Lower lobe of right lung (tissue), 2 donors: ENCODE measurements at regions of chr7 and their contacts with region 1.

Region 1: GRCh38 chr7:77759294-77759889 is 38.8 kb downstream of the TMEM60 start:
- DNase-seq: no peak
- ATAC-seq: peak; percentile 82 to 84
- H3K4me3 ChIP-seq: no peak overlapping the region
- H3K27ac ChIP-seq: no peak overlapping the region
- H3K4me1 ChIP-seq: peaks cover 5% of the 10 kb centered on the region
- H3K27me3 ChIP-seq: no peaks in the 10 kb centered on the region
- CTCF ChIP-seq: peak; percentile 85

Region 2: GRCh38 chr7:77657427-77658224 is 101.8 kb before region 1 on chr7:
- intact Hi-C with region 1: loop called (anchors 10 kb)
- DNase-seq: no peak
- ATAC-seq: peak; percentile 59 to 71
- H3K4me3 ChIP-seq: no peak overlapping the region
- H3K27ac ChIP-seq: no peak overlapping the region
- H3K4me1 ChIP-seq: no peaks in the 10 kb centered on the region
- H3K27me3 ChIP-seq: no peaks in the 10 kb centered on the region
- CTCF ChIP-seq: peak; percentile 50